ENCODE measurements at regions of chr11 and their contacts with region 1.

Region 1: GRCh38 chr11:93543292-93543977 is at the start of gene SMCO4:
- DNase-seq: peak; percentile 91
- total RNA-seq, gene SMCO4: 40.0 TPM

Region 2: GRCh38 chr11:93234602-93235207 is 308.7 kb before region 1 on chr11:
- intact Hi-C with region 1: loop called (anchors 1 kb)
- DNase-seq: peak; percentile 78